ENCODE measurements at regions of chr2 and their contacts with region 1.

Region 1: GRCh38 chr2:224778474-224778877 is 62.3 kb upstream of the CCDC195 start:
- DNase-seq: peak; percentile 18 to 68 (median 58)
- ATAC-seq: peak; percentile 80
- H3K4me3 ChIP-seq: no peak overlapping the region
- H3K4me3 Mint-ChIP-seq: no peak overlapping the region
- H3K27ac ChIP-seq: no peak overlapping the region
- H3K27ac Mint-ChIP-seq: peak overlapping the region in 5 of 9 donors; percentile 10 to 54 (median 43)
- H3K4me1 ChIP-seq: no peaks in the 10 kb centered on the region
- H3K4me1 Mint-ChIP-seq: peaks cover 0 to 22% (median 11%) of the 10 kb centered on the region in 7 donors
- H3K27me3 ChIP-seq: no peaks in the 10 kb centered on the region
- H3K27me3 Mint-ChIP-seq: no peaks in the 10 kb centered on the region

Region 2: GRCh38 chr2:224357098-224357901 is 421.2 kb before region 1 on chr2:
- CTCF ChIA-PET with region 1: no interaction called
- POLR2A ChIA-PET with region 1: no interaction called
- intact Hi-C with region 1: loop called (anchors 1 kb)
- DNase-seq: peak; percentile 19 to 68 (median 59)
- ATAC-seq: peak; percentile 82
- H3K4me3 ChIP-seq: no peak overlapping the region
- H3K4me3 Mint-ChIP-seq: no peak overlapping the region
- H3K27ac ChIP-seq: no peak overlapping the region
- H3K27ac Mint-ChIP-seq: no peak overlapping the region
- H3K4me1 ChIP-seq: no peaks in the 10 kb centered on the region
- H3K4me1 Mint-ChIP-seq: peaks cover 0 to 2% (median 0%) of the 10 kb centered on the region in 7 donors
- H3K27me3 ChIP-seq: no peaks in the 10 kb centered on the region
- H3K27me3 Mint-ChIP-seq: peaks cover 8 to 20% (median 9%) of the 10 kb centered on the region in 5 donors

Region 3: DNA sequence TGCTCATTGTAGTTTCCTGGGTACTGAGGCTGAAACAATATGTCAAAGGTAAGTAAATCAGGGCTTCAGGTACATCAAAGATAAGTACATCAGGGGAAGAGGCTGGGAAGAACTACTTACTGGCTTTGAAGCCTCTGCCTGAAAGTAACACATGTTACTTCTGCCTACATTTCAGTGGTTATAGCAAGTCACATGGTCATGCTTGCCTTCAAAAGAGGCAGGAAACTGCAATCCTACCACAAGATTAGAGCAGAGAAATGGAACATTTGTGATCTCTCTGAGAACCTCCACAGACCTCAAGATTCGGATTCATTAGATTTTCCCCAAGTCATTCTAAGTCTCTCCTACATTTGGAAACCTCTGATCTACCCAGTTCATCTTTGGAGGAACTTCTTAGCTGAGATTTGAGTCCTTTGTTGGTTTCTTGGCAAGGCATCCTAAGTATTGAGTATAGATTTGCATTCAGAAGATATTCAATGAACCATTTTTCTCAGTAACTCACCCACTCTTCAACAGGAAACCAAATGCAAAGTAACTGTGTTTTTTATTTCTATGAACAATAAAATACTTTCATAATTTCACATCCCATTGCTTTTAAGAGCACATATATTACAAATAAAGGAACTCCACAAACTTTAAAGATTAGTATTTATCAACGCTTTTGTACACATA is 13.8 kb before region 1 on chr2:
- CTCF ChIA-PET with region 1: interaction called, 3 read pairs
- POLR2A ChIA-PET with region 1: no interaction called
- intact Hi-C with region 1: loop called in 1 of 2 experiments (anchors 1 kb)
- DNase-seq: peak in 7 of 9 donors; percentile 39 to 72 (median 53)
- ATAC-seq: peak; percentile 88
- H3K4me3 ChIP-seq: no peak overlapping the region
- H3K4me3 Mint-ChIP-seq: peak overlapping the region; percentile 7 to 77 (median 38)
- H3K27ac ChIP-seq: peak overlapping the region; percentile 34
- H3K27ac Mint-ChIP-seq: peak overlapping the region; percentile 70 to 92 (median 76)
- H3K4me1 ChIP-seq: peaks cover 0 to 18% of the 10 kb centered on the region in 2 donors
- H3K4me1 Mint-ChIP-seq: peaks cover 20 to 69% (median 42%) of the 10 kb centered on the region in 7 donors
- H3K27me3 ChIP-seq: no peaks in the 10 kb centered on the region
- H3K27me3 Mint-ChIP-seq: no peaks in the 10 kb centered on the region

Region 4: DNA sequence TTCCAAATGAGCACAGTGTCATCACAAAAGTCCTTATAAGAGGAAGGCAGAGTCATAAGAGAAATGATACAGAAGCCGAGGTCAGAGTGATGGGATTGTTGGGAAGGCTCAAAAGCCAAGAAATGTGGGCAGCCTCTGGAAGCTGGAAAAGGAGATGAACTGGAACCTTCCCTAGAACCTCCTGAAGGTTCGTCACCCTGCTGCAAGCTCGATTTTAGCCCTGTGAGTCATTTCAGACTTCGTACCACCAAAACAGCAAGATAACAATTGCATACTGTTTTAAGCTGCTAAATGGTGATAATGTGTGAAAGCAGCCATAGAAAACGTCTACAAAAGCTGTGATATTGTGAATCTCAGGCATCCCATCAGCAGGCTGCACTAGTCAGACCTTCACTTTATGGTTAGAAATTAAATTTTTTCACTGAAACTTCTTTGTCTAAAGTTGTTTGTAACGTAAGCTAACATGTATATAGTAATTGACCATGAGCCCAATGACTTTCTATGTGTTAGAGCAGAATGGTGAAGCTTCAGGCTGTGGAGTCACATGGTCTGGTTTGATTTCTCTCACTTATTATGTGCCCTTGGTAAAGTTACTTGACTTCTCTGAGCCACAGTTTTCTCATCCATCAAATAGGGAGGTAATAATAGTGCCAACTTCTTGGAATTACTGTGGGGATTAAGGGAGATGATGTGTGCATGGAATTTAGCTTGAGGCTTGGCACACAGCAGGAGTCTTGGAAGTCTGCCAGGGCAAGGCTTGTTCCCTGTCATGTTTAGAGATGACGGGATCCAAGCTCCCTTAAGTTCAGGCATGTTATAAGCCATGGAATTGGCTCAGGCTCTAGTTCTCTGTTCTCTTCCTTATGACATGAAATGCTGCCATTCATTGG is 69.7 kb after region 1 on chr2:
- CTCF ChIA-PET with region 1: no interaction called
- POLR2A ChIA-PET with region 1: no interaction called
- intact Hi-C with region 1: loop called in 1 of 2 experiments (anchors 10 kb)
- DNase-seq: no peak
- ATAC-seq: no peak
- H3K4me3 ChIP-seq: no peak overlapping the region
- H3K4me3 Mint-ChIP-seq: no peak overlapping the region
- H3K27ac ChIP-seq: no peak overlapping the region
- H3K27ac Mint-ChIP-seq: peak overlapping the region in 4 of 9 donors; percentile 25 to 75 (median 62)
- H3K4me1 ChIP-seq: no peaks in the 10 kb centered on the region
- H3K4me1 Mint-ChIP-seq: peaks cover 0 to 14% (median 0%) of the 10 kb centered on the region in 7 donors
- H3K27me3 ChIP-seq: no peaks in the 10 kb centered on the region
- H3K27me3 Mint-ChIP-seq: no peaks in the 10 kb centered on the region

Region 5: DNA sequence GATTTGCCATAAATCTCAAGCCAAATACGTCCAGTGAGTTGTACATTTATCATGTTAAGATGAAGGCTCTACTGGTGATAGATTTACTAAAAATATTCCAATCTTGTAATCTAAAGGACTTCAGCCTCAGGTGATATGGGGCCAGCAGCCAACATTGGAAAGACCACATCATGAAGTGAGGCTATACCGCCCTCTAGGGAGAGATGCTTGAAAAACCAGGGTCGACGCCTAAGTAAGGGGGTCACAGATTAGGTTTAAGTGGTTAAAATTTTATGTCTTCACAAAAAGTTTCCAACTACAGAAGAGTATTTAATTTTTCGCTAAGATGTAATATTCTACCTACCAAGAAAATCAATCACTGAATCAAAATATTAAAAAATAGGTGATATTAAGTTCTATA is 230.5 kb after region 1 on chr2:
- CTCF ChIA-PET with region 1: no interaction called
- POLR2A ChIA-PET with region 1: no interaction called
- intact Hi-C with region 1: loop called in 1 of 2 experiments (anchors 1 kb)
- DNase-seq: no peak
- ATAC-seq: peak; percentile 64
- H3K4me3 ChIP-seq: no peak overlapping the region
- H3K4me3 Mint-ChIP-seq: peak overlapping the region in 5 of 10 donors; percentile 17 to 61 (median 23)
- H3K27ac ChIP-seq: no peak overlapping the region
- H3K27ac Mint-ChIP-seq: peak overlapping the region in 7 of 9 donors; percentile 5 to 88 (median 74)
- H3K4me1 ChIP-seq: peaks cover 14 to 42% of the 10 kb centered on the region in 2 donors
- H3K4me1 Mint-ChIP-seq: peaks cover 55 to 98% (median 96%) of the 10 kb centered on the region in 7 donors
- H3K27me3 ChIP-seq: no peaks in the 10 kb centered on the region
- H3K27me3 Mint-ChIP-seq: no peaks in the 10 kb centered on the region

Measured in naive thymus-derived CD4-positive, alpha-beta T cell (primary cell).